GM12878 (cell line): ENCODE measurements at regions of chr18 and their contacts with region 1.

Region 1: GRCh38 chr18:623761-624620 is 27.2 kb downstream of the CLUL1 start:
- DNase-seq: no peak
- ATAC-seq: peak; percentile 97
- H3K4me3 ChIP-seq: no peak overlapping the region
- H3K27ac ChIP-seq: no peak overlapping the region
- H3K4me1 ChIP-seq: no peaks in the 10 kb centered on the region
- H3K27me3 ChIP-seq: no peaks in the 10 kb centered on the region
- CTCF ChIP-seq: peak; percentile 51 to 73 (median 72)
- EP300 ChIP-seq: no peak
- POLR2A ChIP-seq: no peak
- RAD21 ChIP-seq: peak; percentile 84

Region 2: GRCh38 chr18:379681-380330 is 244.2 kb before region 1 on chr18:
- CTCF ChIA-PET with region 1: no interaction called
- POLR2A ChIA-PET with region 1: no interaction called
- RAD21 ChIA-PET with region 1: no interaction called
- SMC1A ChIA-PET with region 1: no interaction called
- in situ Hi-C with region 1: no loop called
- intact Hi-C with region 1: no loop called
- DNase-seq: no peak
- ATAC-seq: no peak
- H3K4me3 ChIP-seq: no peak overlapping the region
- H3K27ac ChIP-seq: no peak overlapping the region
- H3K4me1 ChIP-seq: no peaks in the 10 kb centered on the region
- H3K27me3 ChIP-seq: peaks cover 0 to 3% of the 10 kb centered on the region in 2 experiments; a peak in 1 of 4 replicates
- CTCF ChIP-seq: no peak
- EP300 ChIP-seq: no peak
- POLR2A ChIP-seq: no peak
- RAD21 ChIP-seq: no peak

Region 3: GRCh38 chr18:644395-645004 is 20.5 kb after region 1 on chr18:
- CTCF ChIA-PET with region 1: interaction called, 18 read pairs
- POLR2A ChIA-PET with region 1: no interaction called
- RAD21 ChIA-PET with region 1: interaction called, 7 read pairs
- SMC1A ChIA-PET with region 1: interaction called, 8 read pairs
- in situ Hi-C with region 1: no loop called
- intact Hi-C with region 1: no loop called
- DNase-seq: peak; percentile 19
- ATAC-seq: peak; percentile 71
- H3K4me3 ChIP-seq: no peak overlapping the region
- H3K27ac ChIP-seq: no peak overlapping the region
- H3K4me1 ChIP-seq: peaks cover 5% of the 10 kb centered on the region; the same call in 1 of the 2 replicates
- H3K27me3 ChIP-seq: no peaks in the 10 kb centered on the region
- CTCF ChIP-seq: no peak
- EP300 ChIP-seq: no peak
- POLR2A ChIP-seq: no peak
- RAD21 ChIP-seq: no peak

Region 4: GRCh38 chr18:677951-678381 is 54.0 kb after region 1 on chr18:
- CTCF ChIA-PET with region 1: interaction called, 8 read pairs
- POLR2A ChIA-PET with region 1: no interaction called
- RAD21 ChIA-PET with region 1: interaction called, 4 read pairs
- SMC1A ChIA-PET with region 1: interaction called, 4 read pairs
- in situ Hi-C with region 1: no loop called
- intact Hi-C with region 1: loop called (anchors 5 kb)
- DNase-seq: no peak
- ATAC-seq: no peak
- H3K4me3 ChIP-seq: no peak overlapping the region
- H3K27ac ChIP-seq: no peak overlapping the region
- H3K4me1 ChIP-seq: no peaks in the 10 kb centered on the region
- H3K27me3 ChIP-seq: no peaks in the 10 kb centered on the region
- CTCF ChIP-seq: no peak
- EP300 ChIP-seq: no peak
- POLR2A ChIP-seq: 0 out of 2 replicates have a peak, but pooled peaks have one; percentile 16
- RAD21 ChIP-seq: no peak

Region 5: GRCh38 chr18:706405-706804 is 82.4 kb after region 1 on chr18:
- CTCF ChIA-PET with region 1: interaction called, 6 read pairs
- POLR2A ChIA-PET with region 1: no interaction called
- RAD21 ChIA-PET with region 1: interaction called, 5 read pairs
- SMC1A ChIA-PET with region 1: interaction called, 13 read pairs
- in situ Hi-C with region 1: no loop called
- intact Hi-C with region 1: loop called (anchors 10 kb)
- DNase-seq: no peak
- ATAC-seq: no peak
- H3K4me3 ChIP-seq: no peak overlapping the region
- H3K27ac ChIP-seq: no peak overlapping the region
- H3K4me1 ChIP-seq: no peaks in the 10 kb centered on the region; the same call in 1 of the 2 replicates
- H3K27me3 ChIP-seq: no peaks in the 10 kb centered on the region
- CTCF ChIP-seq: no peak
- EP300 ChIP-seq: no peak
- POLR2A ChIP-seq: no peak
- RAD21 ChIP-seq: no peak

Region 6: GRCh38 chr18:741931-742512 is 118.0 kb after region 1 on chr18:
- CTCF ChIA-PET with region 1: interaction called, 82 read pairs
- POLR2A ChIA-PET with region 1: no interaction called
- RAD21 ChIA-PET with region 1: interaction called, 10 read pairs
- SMC1A ChIA-PET with region 1: interaction called, 21 read pairs
- in situ Hi-C with region 1: no loop called
- intact Hi-C with region 1: loop called (anchors 5 kb)
- DNase-seq: peak; percentile 30
- ATAC-seq: peak; percentile 93
- H3K4me3 ChIP-seq: no peak overlapping the region
- H3K27ac ChIP-seq: no peak overlapping the region
- H3K4me1 ChIP-seq: no peaks in the 10 kb centered on the region
- H3K27me3 ChIP-seq: no peaks in the 10 kb centered on the region
- CTCF ChIP-seq: peak; percentile 52 to 79 (median 65); a peak in 5 of 6 replicates
- EP300 ChIP-seq: no peak
- POLR2A ChIP-seq: no peak
- RAD21 ChIP-seq: peak; percentile 91